Heart right ventricle (tissue), 16 donors: ENCODE measurements at regions of chr14 and their contacts with region 1.

Region 1: GRCh38 chr14:60195179-60195810 is 30.1 kb upstream of the DHRS7 start:
- DNase-seq: no peak
- ATAC-seq: peak in 5 of 8 donors; percentile 34 to 63 (median 52)
- H3K4me3 ChIP-seq: no peak overlapping the region
- H3K27ac ChIP-seq: no peak overlapping the region
- H3K4me1 ChIP-seq: peaks cover 0 to 6% (median 0%) of the 10 kb centered on the region in 9 donors
- H3K27me3 ChIP-seq: no peaks in the 10 kb centered on the region
- CTCF ChIP-seq: peak in 7 of 9 donors; percentile 15 to 52 (median 47)

Region 2: DNA sequence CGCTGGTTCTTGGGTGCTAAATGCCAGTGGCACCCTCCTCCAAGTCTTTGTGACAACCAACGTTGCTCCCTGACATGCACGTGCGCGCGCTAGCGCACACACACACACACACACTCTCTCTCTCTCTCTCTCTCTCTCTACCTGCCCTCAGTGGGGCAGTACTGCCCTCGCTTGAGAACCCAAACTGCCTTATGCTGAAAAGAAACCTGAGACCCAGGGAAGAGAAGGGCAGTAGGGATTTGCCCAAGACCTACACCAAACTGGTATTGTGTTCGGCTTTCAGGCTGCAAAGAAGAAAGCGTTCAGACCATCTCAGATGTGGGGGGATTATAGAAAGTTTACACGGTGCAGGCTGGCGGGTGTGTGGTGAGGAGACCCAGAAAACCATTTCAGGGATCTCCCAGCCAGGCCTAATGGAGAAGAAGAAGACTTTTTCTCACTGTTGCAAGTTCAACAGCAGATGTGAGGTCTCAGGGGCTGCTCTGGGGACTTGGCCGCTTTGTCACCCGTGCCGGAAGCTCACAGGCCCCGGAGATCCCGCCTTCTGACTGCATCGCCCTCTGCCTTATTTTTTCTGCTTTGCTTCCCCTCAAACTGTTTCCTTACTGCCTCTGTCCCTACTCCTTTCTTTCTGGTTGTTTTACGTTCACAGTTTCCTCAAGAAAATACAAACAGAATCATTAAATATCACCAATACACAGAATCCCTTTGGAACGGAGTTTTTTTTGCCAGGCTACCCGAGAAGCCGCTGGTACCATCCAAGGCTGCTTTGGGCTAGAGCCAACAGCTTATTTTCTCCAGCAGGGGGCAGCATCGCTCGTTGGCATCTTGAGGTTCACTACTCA is 136.1 kb after region 1 on chr14:
- intact Hi-C with region 1: loop called in 5 of 10 experiments (anchors 5 to 10 kb)
- DNase-seq: peak; percentile 49 to 52
- ATAC-seq: peak; percentile 55 to 89 (median 76)
- H3K4me3 ChIP-seq: peak overlapping the region in 9 of 10 donors; percentile 28 to 58 (median 46)
- H3K27ac ChIP-seq: peak overlapping the region in 4 of 10 donors; percentile 9 to 45 (median 22)
- H3K4me1 ChIP-seq: peaks cover 3 to 22% (median 9%) of the 10 kb centered on the region in 9 donors
- H3K27me3 ChIP-seq: peaks cover 0 to 42% (median 16%) of the 10 kb centered on the region in 7 donors
- CTCF ChIP-seq: peak; percentile 37 to 86 (median 70)

Region 3: DNA sequence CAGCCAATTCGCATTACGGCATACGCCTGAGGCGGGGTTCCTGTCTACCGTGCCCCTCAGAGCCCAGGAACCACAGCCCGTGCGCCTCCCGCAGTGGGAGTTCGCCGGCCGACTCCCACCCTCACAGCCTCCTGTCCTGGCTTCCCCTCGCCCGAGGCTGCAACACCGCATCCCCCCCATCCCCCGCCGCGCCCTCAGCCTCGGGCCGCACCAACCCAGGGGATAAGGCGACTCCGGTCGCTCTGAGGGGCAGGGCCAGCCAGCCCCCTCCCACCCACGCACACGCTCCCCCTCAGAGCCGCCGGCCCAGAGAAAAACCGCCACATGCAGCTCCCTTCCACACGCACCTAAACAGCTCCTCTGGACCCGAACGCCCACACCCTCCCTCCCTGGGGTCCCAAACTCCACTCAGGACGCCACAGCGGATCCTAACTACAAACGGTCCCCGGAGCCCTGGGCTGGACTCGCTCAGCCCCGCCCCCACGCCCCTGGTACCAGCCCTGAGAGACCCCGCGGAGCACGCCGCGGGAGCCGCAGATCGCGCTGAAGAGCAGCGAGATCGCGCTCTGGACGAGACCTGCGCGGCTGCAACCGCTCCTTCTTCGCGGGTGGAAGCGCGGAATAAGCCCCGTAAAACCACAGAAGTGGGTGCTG is 290.4 kb after region 1 on chr14 and contains the start of gene C14orf39:
- intact Hi-C with region 1: loop called in 1 of 10 experiments (anchors 10 kb)
- DNase-seq: no peak
- ATAC-seq: peak in 1 of 8 donors; percentile 15
- H3K4me3 ChIP-seq: peak within 1 kb of the TSS in 6 of 10 donors; percentile 4 to 31 (median 17)
- H3K27ac ChIP-seq: no peak within 1 kb of the TSS
- H3K4me1 ChIP-seq: peaks cover 0 to 10% (median 6%) of the 10 kb centered on the region in 9 donors
- H3K27me3 ChIP-seq: peaks cover 12 to 87% (median 74%) of the 10 kb centered on the region in 7 donors
- CTCF ChIP-seq: no peak
- total RNA-seq, gene C14orf39: not detected